ENCODE measurements at regions of chr2 and their contacts with region 1.

Region 1: DNA sequence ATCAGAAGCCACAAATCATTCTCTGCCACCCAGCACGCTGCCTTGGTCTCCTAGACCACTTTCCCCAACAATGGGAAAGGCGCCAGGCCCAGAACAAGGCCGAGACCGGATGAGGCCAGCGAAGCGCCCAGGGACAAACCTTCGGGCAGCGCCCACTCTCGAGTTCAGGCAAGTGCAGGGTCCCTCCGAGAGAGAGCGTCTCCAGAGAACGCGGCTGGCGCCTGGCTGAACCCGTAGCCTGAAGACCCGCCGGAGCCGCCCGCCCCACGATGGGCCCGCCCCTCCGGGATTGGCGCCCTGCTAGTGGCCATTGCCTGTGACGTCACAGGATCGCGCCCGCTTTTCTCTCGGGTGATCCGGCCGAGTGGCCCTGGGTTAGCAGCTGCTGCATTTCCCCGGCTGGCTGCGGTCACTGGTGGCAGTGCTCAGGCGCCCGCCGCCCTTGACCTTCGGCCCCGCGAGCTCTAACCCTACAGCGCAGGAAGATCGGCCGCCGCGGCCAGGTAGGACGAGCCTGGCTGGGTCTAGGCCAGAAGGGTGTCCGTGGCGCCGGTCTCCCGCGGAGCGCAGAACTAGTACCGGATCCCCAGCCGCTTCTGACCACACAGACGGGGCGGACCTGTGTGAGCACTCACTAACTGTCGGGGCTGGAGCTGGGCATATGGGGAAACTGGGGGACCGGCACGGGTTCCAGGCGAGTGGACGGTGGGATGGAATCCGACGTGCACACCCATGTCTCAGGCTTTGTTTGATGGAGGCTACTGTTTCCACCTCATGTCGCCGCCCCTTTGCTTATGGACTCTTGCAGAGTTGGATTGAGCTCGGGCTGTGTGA is at the start of gene FAHD2A:
- DNase-seq: no peak
- H3K4me3 ChIP-seq: peak within 1 kb of the TSS; percentile 96
- CTCF ChIP-seq: no peak

Region 2: DNA sequence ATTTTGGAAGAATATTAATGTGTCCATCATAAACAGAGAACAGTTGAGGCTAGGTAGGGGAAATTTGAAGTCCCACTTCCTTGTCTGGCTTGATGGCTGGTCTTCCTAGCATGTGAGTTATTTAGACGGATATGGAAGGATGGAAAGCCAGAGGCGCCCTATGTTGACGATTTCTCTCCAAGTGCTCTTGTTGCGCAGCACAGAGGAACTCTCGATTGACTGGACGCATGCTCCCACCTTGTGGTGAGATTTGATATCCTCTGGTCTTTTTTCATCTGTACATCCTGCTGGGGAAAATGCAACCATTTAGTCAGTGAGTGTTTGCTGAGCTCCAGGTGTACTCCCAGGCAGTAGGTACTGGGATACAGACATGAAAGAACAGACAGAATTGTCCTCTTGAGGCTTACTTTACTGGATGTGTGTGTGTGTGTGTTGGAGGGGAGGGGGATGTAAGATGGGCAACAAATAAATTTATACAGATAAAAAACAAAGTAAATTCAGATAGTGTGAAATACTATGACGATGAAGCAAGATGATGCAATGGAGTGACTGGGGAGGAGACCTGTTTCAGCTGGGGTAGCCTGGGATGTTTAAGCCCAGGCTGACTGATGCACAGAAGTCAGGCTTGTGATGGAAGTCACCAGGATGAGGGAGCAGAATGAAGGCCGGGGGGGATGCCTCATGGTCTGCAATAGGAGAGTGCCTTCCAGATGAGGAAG is 326.4 kb after region 1 on chr2:
- CTCF ChIA-PET with region 1: interaction called, 16 read pairs
- POLR2A ChIA-PET with region 1: no interaction called
- DNase-seq: peak; percentile 59
- H3K4me3 ChIP-seq: no peak overlapping the region
- CTCF ChIP-seq: peak; percentile 60